Mammary epithelial cell (primary cell): ENCODE measurements at regions of chr5 and their contacts with region 1.

Region 1: DNA sequence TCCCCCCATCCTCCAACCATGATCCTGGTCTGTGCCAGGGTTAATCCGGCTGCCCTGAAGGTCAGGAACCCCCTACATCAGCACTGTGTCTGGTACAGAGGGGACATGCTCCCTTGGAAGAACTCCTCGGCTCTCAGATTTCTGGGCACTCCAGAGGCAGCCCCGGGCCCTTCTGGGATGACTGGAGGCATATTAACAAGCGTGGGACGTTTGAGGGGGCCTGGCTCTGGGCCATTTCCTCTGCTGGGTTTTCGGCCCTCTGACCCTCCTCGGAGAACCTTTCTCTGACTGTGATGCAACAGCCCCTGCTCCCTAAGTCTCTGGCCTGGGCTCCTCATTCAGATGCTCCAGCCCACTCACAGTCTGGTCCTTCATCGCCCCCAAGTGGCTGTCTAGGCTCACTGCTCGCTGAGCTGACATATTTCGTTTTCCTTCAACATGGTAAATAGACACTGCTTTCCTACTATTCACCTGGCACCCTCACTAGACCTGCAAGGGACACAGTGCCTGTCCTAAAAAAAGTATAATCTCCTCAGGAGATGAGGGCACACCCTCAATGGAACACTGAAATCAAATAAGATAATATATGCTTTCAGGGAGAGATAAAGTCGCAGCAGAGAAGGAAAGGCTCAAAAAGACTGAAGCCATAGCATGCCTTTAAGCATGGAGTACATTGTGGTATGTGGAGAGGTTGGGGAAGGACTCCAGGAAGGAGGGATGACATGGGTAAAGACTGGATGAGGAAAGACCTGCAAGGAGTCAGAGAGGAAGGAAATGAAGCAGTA is 404.7 kb upstream of the TRPC7 start:
- DNase-seq: peak; percentile 45
- H3K4me3 ChIP-seq: no peak overlapping the region
- H3K27ac ChIP-seq: no peak overlapping the region
- H3K4me1 ChIP-seq: no peaks in the 10 kb centered on the region
- H3K27me3 ChIP-seq: peaks cover 2% of the 10 kb centered on the region
- CTCF ChIP-seq: peak; percentile 93 to 95

Region 2: DNA sequence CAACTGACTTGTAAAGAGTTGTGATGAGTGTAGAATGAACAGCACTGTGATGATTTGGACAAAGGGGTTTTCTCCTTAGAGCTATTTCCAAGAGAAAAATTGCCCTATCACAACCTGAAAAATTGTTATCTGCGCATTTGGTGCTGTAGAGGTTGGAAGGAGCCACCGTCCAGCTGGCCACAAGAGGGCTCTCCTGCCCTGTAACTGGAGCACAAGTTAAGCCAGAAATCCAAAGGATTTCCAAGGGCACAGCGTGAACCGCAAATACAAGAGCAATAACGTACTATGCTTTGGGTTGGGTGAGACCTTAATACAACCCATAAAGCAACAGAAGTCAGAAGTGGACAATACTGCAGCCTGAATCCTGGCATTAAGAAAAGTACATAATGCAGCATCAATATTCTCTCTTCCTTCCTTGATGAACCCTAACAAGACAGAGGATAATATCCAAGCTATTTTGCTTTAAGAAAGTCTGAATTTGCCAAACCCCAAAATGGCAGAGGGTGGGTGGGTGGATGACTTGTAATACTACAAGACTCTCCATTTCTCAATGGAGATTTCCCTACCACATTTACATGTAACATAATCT is 520.3 kb before region 1 on chr5:
- CTCF ChIA-PET with region 1: no interaction called
- dilution Hi-C with region 1: no loop called
- in situ Hi-C with region 1: loop called in 1 of 2 experiments (anchors 25 kb)
- intact Hi-C with region 1: loop called (anchors 1 kb)
- DNase-seq: peak; percentile 37
- H3K4me3 ChIP-seq: no peak overlapping the region
- H3K27ac ChIP-seq: no peak overlapping the region
- H3K4me1 ChIP-seq: peaks cover 10% of the 10 kb centered on the region
- H3K27me3 ChIP-seq: no peaks in the 10 kb centered on the region
- CTCF ChIP-seq: peak; percentile 97 to 98

Region 3: DNA sequence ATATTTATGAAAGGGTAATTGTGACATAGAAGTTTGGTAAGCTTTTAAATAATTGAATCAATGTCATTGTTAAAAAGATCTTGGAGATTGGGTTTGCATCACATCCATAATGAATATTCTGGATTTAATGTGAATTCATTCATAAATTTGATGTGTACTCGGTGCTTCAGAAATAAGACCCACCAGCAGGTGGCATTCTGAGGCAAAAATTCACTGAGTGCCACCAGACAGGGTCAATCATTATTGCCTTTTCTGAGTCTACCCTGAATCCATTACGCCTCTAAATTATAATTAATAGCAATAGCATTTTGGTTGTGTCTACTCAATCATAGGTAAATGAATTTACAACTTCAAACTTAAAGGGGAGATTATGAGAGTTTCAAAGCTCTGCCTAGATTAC is 405.8 kb before region 1 on chr5:
- CTCF ChIA-PET with region 1: no interaction called
- dilution Hi-C with region 1: no loop called
- in situ Hi-C with region 1: loop called (anchors 10 to 25 kb)
- intact Hi-C with region 1: loop called (anchors 1 kb)
- DNase-seq: no peak
- H3K4me3 ChIP-seq: no peak overlapping the region
- H3K27ac ChIP-seq: no peak overlapping the region
- H3K4me1 ChIP-seq: no peaks in the 10 kb centered on the region
- H3K27me3 ChIP-seq: peaks cover 2% of the 10 kb centered on the region
- CTCF ChIP-seq: peak; percentile 19 to 53

Region 4: DNA sequence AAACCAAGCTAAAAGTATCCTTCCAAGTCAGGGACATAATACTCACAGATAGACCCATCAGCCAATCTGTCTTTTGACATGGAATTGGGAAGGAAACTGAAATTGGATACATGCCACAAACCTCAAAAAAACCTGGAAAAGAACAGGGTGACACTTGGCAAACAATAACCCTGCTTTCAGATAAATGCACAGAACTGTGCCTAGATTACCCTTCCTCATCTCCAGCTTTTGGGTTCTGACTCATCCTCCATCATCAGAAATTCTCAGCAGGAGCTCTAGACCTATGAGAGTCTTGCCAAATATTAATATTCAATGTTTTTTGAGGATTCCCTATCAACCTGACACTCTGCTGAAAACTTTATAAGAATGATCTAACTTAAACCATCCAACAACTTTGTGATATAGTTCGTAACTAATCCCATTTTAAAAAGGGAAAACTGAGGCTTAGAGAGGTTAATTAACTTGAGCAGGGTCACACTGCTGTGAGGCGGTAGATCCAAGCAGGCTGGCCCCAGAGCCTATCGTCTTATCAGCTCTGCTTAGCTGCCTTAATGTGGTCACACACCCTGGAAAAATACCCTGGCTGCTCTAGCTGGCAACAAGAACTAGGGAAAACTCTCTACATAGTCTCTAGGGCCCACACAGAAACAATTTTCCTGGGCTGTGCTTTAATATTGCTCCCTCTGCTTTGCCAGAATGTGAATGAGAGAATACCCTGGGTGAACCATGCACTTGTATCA is 247.7 kb before region 1 on chr5:
- CTCF ChIA-PET with region 1: no interaction called
- dilution Hi-C with region 1: no loop called
- in situ Hi-C with region 1: no loop called
- intact Hi-C with region 1: no loop called
- DNase-seq: no peak
- H3K4me3 ChIP-seq: no peak overlapping the region
- H3K27ac ChIP-seq: no peak overlapping the region
- H3K4me1 ChIP-seq: no peaks in the 10 kb centered on the region
- H3K27me3 ChIP-seq: peaks cover 7% of the 10 kb centered on the region
- CTCF ChIP-seq: no peak

Region 5: DNA sequence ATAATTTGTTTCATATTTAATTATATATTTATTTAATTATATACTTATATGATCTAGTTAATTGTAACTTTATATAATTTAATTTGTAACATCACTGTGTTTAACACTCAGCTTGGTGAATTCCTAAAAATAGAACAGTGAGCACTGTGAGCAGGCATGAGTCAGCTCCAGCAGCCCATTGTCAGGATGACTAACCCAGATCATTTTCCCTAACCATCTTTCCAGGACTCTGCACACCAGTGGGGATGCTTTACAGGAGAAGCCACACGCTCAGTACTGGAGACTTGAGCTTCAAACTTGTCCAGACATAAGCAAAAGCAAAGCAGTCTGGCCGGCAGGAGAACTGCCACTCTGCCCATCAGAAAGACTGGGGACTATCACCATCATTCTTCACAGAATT is 41.5 kb after region 1 on chr5:
- CTCF ChIA-PET with region 1: no interaction called
- dilution Hi-C with region 1: no loop called
- in situ Hi-C with region 1: no loop called
- intact Hi-C with region 1: no loop called
- DNase-seq: peak; percentile 71
- H3K4me3 ChIP-seq: no peak overlapping the region
- H3K27ac ChIP-seq: no peak overlapping the region
- H3K4me1 ChIP-seq: peaks cover 14% of the 10 kb centered on the region
- H3K27me3 ChIP-seq: no peaks in the 10 kb centered on the region
- CTCF ChIP-seq: no peak